ENCODE measurements at regions of chr20 and their contacts with region 1.

Region 1: GRCh38 chr20:36881888-36882287 is 6.0 kb downstream of the TLDC2 start:
- DNase-seq: no peak
- H3K4me3 ChIP-seq: no peak overlapping the region
- CTCF ChIP-seq: no peak

Region 2: GRCh38 chr20:36861875-36862801 is 19.8 kb before region 1 on chr20:
- CTCF ChIA-PET with region 1: interaction called, 11 read pairs
- POLR2A ChIA-PET with region 1: no interaction called
- DNase-seq: no peak
- H3K4me3 ChIP-seq: peak overlapping the region; percentile 69
- CTCF ChIP-seq: no peak

Region 3: GRCh38 chr20:37090407-37090806 is 208.5 kb after region 1 on chr20:
- CTCF ChIA-PET with region 1: no interaction called
- POLR2A ChIA-PET with region 1: no interaction called
- DNase-seq: no peak
- H3K4me3 ChIP-seq: no peak overlapping the region
- CTCF ChIP-seq: no peak

Region 4: GRCh38 chr20:37123441-37123840 is 241.6 kb after region 1 on chr20:
- CTCF ChIA-PET with region 1: no interaction called
- POLR2A ChIA-PET with region 1: no interaction called
- DNase-seq: no peak
- H3K4me3 ChIP-seq: no peak overlapping the region
- CTCF ChIP-seq: no peak

Region 5: GRCh38 chr20:37142708-37143107 is 260.8 kb after region 1 on chr20:
- CTCF ChIA-PET with region 1: no interaction called
- POLR2A ChIA-PET with region 1: no interaction called
- DNase-seq: no peak
- H3K4me3 ChIP-seq: no peak overlapping the region
- CTCF ChIP-seq: no peak